Activated T-helper 1 cell treated with anti-CD3 and anti-CD28 coated beads, Interleukin-12 subunit alpha, Interleukin-12 subunit beta, Interleukin-2, Interleukin-4 antibody, amounts not matched to agents 30 ng/mL and 10 ng/mL and 1 ng/mL, durations not matched to agents 14 hours and 24 hours and 36 hours (primary cell): ENCODE measurements at regions of chr11 and their contacts with region 1.

Region 1: GRCh38 chr11:34916015-34916842 is at the starts of genes APIP and PDHX:
- DNase-seq: peak; percentile 90
- H3K4me3 Mint-ChIP-seq: peak within 1 kb of the TSS; percentile 98
- H3K27ac Mint-ChIP-seq: peak within 1 kb of the TSS; percentile 91
- H3K4me1 Mint-ChIP-seq: peaks cover 42% of the 10 kb centered on the region
- H3K27me3 Mint-ChIP-seq: no peaks in the 10 kb centered on the region
- total RNA-seq, gene APIP: 26.3 and 26.8 TPM in 2 replicates
- total RNA-seq, gene PDHX: 32.0 TPM in 2 replicates

Region 2: GRCh38 chr11:34051349-34052035 is 864.7 kb before region 1 on chr11 and contains the start of gene CAPRIN1:
- intact Hi-C with region 1: loop called (anchors 1 kb)
- DNase-seq: peak; percentile 80
- H3K4me3 Mint-ChIP-seq: peak within 1 kb of the TSS; percentile 99
- H3K27ac Mint-ChIP-seq: peak within 1 kb of the TSS; percentile 97
- H3K4me1 Mint-ChIP-seq: peaks cover 8% of the 10 kb centered on the region
- H3K27me3 Mint-ChIP-seq: no peaks in the 10 kb centered on the region
- total RNA-seq, gene CAPRIN1: 285 and 289 TPM in 2 replicates

Region 3: GRCh38 chr11:34438529-34439507 is 477.4 kb before region 1 on chr11 and contains the start of gene CAT:
- intact Hi-C with region 1: loop called (anchors 1 kb)
- DNase-seq: peak; percentile 97
- H3K4me3 Mint-ChIP-seq: peak within 1 kb of the TSS; percentile 93
- H3K27ac Mint-ChIP-seq: peak within 1 kb of the TSS; percentile 92
- H3K4me1 Mint-ChIP-seq: peaks cover 26% of the 10 kb centered on the region
- H3K27me3 Mint-ChIP-seq: no peaks in the 10 kb centered on the region
- total RNA-seq, gene CAT: 19.1 and 19.9 TPM in 2 replicates

Region 4: GRCh38 chr11:35040221-35040942 is 124.2 kb after region 1 on chr11:
- intact Hi-C with region 1: loop called (anchors 1 kb)
- DNase-seq: peak; percentile 70
- H3K4me3 Mint-ChIP-seq: peak overlapping the region; percentile 72
- H3K27ac Mint-ChIP-seq: peak overlapping the region; percentile 93
- H3K4me1 Mint-ChIP-seq: peaks cover 66% of the 10 kb centered on the region
- H3K27me3 Mint-ChIP-seq: peaks cover 2% of the 10 kb centered on the region

Region 5: DNA sequence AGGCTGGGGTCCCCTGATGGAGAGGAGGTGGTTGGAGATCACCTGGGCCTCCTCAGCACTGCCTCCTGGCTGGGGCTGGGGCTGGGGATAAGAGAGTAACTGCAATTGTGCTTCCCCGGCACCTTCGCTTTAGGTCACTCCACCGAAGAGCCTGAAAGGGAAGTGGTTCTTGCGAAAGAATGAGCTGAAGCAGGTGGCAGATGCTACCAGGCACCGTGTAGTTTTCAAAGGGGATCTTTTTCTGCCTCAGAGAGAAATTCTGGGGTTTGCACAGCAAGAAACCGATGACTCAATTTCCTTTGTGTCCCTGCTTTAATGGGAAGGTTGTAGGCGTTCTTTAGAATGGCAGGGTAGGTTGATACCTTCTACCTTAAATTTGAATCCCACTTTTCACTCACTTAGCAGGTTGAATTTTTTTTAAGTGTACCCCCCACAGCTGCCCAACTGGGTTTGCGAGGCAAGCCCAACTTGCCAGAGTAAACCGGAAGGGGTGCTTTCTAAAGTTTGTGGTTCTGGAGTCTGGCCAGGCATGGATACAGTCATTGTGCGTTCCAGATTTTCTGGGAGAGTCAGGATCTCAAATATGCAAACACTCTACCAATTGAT is 228.0 kb after region 1 on chr11:
- intact Hi-C with region 1: loop called (anchors 2 kb)
- DNase-seq: peak; percentile 69
- H3K4me3 Mint-ChIP-seq: peak overlapping the region; percentile 97
- H3K27ac Mint-ChIP-seq: peak overlapping the region; percentile 93
- H3K4me1 Mint-ChIP-seq: peaks cover 84% of the 10 kb centered on the region
- H3K27me3 Mint-ChIP-seq: no peaks in the 10 kb centered on the region

Region 6: GRCh38 chr11:35343033-35343598 is 426.9 kb after region 1 on chr11:
- intact Hi-C with region 1: loop called (anchors 1 kb)
- DNase-seq: peak; percentile 65
- H3K4me3 Mint-ChIP-seq: peak overlapping the region; percentile 27
- H3K27ac Mint-ChIP-seq: peak overlapping the region; percentile 79
- H3K4me1 Mint-ChIP-seq: peaks cover 46% of the 10 kb centered on the region
- H3K27me3 Mint-ChIP-seq: peaks cover 9% of the 10 kb centered on the region